Calu3 (cell line): ENCODE measurements at regions of chr5 and their contacts with region 1.

Region 1: GRCh38 chr5:74766849-74767578 is at the starts of genes GFM2 and NSA2:
- DNase-seq: peak; percentile 94
- H3K4me3 Mint-ChIP-seq: peak within 1 kb of the TSS; percentile 99
- H3K27ac Mint-ChIP-seq: peak within 1 kb of the TSS; percentile 98
- H3K4me1 Mint-ChIP-seq: peaks cover 19% of the 10 kb centered on the region
- H3K27me3 Mint-ChIP-seq: no peaks in the 10 kb centered on the region
- CTCF ChIP-seq: no peak
- total RNA-seq, gene GFM2: 51.2 and 57.1 TPM in 2 replicates
- total RNA-seq, gene NSA2: 171 and 203 TPM in 2 replicates

Region 2: GRCh38 chr5:74903165-74903787 is 136.3 kb after region 1 on chr5:
- CTCF ChIA-PET with region 1: interaction called, 3 read pairs
- intact Hi-C with region 1: loop called (anchors 1 kb)
- DNase-seq: peak; percentile 87
- H3K4me3 Mint-ChIP-seq: no peak overlapping the region
- H3K27ac Mint-ChIP-seq: no peak overlapping the region
- H3K4me1 Mint-ChIP-seq: peaks cover 10% of the 10 kb centered on the region
- H3K27me3 Mint-ChIP-seq: no peaks in the 10 kb centered on the region
- CTCF ChIP-seq: peak; percentile 80